Right cardiac atrium (tissue), 5 donors: ENCODE measurements at regions of chr2 and their contacts with region 1.

Region 1: GRCh38 chr2:134402410-134402809 is 148.5 kb downstream of the MGAT5 start:
- DNase-seq: peak; percentile 55 to 71 (median 68)
- ATAC-seq: peak; percentile 86 to 89
- H3K4me3 ChIP-seq: no peak overlapping the region
- H3K27ac ChIP-seq: no peak overlapping the region
- H3K4me1 ChIP-seq: peaks cover 12% of the 10 kb centered on the region
- H3K27me3 ChIP-seq: no peaks in the 10 kb centered on the region

Region 2: GRCh38 chr2:134245340-134245984 is 156.9 kb before region 1 on chr2:
- intact Hi-C with region 1: loop called in 2 of 4 experiments (anchors 10 kb)
- DNase-seq: peak; percentile 73 to 92 (median 82)
- ATAC-seq: peak; percentile 37 to 70
- H3K4me3 ChIP-seq: no peak overlapping the region
- H3K27ac ChIP-seq: no peak overlapping the region
- H3K4me1 ChIP-seq: peaks cover 8% of the 10 kb centered on the region
- H3K27me3 ChIP-seq: no peaks in the 10 kb centered on the region

Region 3: DNA sequence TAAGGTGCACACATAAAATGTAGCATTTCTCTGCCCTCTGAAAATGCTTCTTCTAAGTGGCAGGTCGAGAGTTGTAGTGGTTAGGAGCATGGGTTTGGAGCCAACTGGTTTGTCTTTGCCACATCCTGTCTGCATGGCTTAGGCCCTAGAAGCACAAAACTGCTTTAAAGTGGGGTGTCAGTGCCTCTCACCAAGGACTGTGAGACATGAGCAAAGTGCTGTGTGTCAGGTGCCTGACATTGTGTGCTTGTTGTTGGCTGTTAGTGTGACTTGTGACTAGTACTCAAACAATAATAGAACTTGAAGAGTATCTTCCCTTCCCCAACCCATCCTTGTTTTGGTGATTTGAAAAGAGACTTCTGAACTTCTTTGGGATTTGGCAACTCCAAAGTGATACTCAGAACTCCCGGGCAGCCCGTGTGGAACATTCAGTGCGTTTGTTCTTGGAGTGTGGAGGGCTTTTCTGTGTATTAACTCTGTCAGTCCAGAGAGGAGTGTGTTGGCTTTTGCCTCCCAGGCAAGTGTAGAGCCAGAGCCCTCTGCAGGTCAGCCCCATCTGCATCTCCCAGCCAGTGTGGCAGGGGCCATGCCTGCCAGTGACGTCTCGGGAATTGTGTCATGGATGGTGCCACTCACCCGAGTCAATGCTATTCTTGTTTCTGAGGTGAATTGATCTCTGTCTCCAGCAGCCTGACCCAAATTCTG is 143.6 kb before region 1 on chr2:
- intact Hi-C with region 1: loop called in 1 of 4 experiments (anchors 10 kb)
- DNase-seq: peak; percentile 47 to 74 (median 60)
- ATAC-seq: peak; percentile 82 to 88
- H3K4me3 ChIP-seq: no peak overlapping the region
- H3K27ac ChIP-seq: peak overlapping the region; percentile 90
- H3K4me1 ChIP-seq: peaks cover 42% of the 10 kb centered on the region
- H3K27me3 ChIP-seq: no peaks in the 10 kb centered on the region

Region 4: GRCh38 chr2:134352844-134353243 is 49.6 kb before region 1 on chr2:
- intact Hi-C with region 1: no loop called
- DNase-seq: no peak
- ATAC-seq: no peak
- H3K4me3 ChIP-seq: no peak overlapping the region
- H3K27ac ChIP-seq: no peak overlapping the region
- H3K4me1 ChIP-seq: peaks cover 2% of the 10 kb centered on the region
- H3K27me3 ChIP-seq: no peaks in the 10 kb centered on the region